Right ventricle myocardium inferior (tissue), 1 donor: ENCODE measurements at regions of chr12 and their contacts with region 1.

Region 1: GRCh38 chr12:49130151-49131050 is 794 bp downstream of the TUBA1B start:
- DNase-seq: peak; percentile 98
- ATAC-seq: peak; percentile 86

Region 2: GRCh38 chr12:49188914-49189367 is 58.5 kb after region 1 on chr12 and contains the start of gene TUBA1A:
- intact Hi-C with region 1: loop called (anchors 1 kb)
- DNase-seq: peak; percentile 96
- ATAC-seq: peak; percentile 93
- total RNA-seq, gene TUBA1A: 135 TPM

Region 3: GRCh38 chr12:50333441-50333840 is 1203.0 kb after region 1 on chr12:
- intact Hi-C with region 1: no loop called
- DNase-seq: no peak
- ATAC-seq: no peak